ENCODE measurements at regions of chr5 and their contacts with region 1.

Region 1: DNA sequence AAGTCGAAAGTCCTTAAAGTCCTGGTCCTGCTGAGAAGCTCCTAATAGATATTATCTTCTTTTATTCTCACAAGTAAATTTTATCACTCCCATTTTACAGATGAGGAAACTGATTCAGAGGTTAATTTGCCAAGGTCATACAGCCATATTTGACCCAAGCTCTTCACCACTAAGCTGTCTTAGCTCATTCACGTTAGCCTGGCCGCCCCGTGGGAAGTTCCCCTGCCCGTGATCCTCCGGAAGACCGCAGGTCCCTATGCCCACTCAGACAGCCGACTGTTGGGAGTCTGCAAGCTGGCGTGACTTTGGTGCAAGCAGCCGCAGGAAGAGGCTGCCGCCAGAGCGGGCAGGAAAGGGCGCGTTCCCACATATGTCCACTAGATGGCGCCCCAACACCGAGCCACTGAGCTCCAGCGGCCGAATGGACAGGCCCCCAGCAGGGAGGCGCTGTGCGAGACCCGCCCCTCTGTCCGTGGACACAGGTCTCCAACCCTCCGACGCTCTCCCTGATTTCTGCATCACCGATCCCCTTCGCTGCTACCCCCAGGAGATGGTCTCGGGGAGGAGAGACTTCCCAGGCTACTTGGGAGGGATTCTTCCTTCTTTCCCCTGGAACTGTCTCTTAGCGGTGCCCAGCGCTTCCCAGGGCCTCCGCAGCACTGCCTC is 10.0 kb upstream of the ARAP3 start:
- DNase-seq: peak; percentile 84 to 90 (median 88)
- ATAC-seq: peak; percentile 89
- H3K4me3 ChIP-seq: peak overlapping the region; percentile 17
- H3K27ac ChIP-seq: peak overlapping the region; percentile 81
- H3K4me1 ChIP-seq: peaks cover 38 to 55% of the 10 kb centered on the region in 2 experiments
- H3K27me3 ChIP-seq: peaks cover 0 to 12% of the 10 kb centered on the region in 2 experiments; a peak in 3 of 5 replicates
- CTCF ChIP-seq: peak; percentile 97 to 99 (median 98)
- EP300 ChIP-seq: no peak
- POLR2A ChIP-seq: no peak
- RAD21 ChIP-seq: peak; percentile 94 to 95

Region 2: GRCh38 chr5:141825791-141826560 is 134.0 kb after region 1 on chr5:
- CTCF ChIA-PET with region 1: interaction called, 3 read pairs
- POLR2A ChIA-PET with region 1: interaction called, 4 read pairs
- in situ Hi-C with region 1: no loop called
- intact Hi-C with region 1: loop called (anchors 5 kb)
- DNase-seq: peak; percentile 56 to 74 (median 60)
- ATAC-seq: peak; percentile 80
- H3K4me3 ChIP-seq: no peak overlapping the region
- H3K27ac ChIP-seq: no peak overlapping the region
- H3K4me1 ChIP-seq: peaks cover 0 to 4% of the 10 kb centered on the region in 2 experiments; a peak in 1 of 5 replicates
- H3K27me3 ChIP-seq: peaks cover 12 to 34% of the 10 kb centered on the region in 2 experiments
- CTCF ChIP-seq: peak; percentile 53 to 75 (median 72)
- EP300 ChIP-seq: no peak
- POLR2A ChIP-seq: no peak
- RAD21 ChIP-seq: peak; percentile 45 to 67; a peak in 3 of 4 replicates